Psoas muscle (tissue), 8 donors: ENCODE measurements at regions of chr19 and their contacts with region 1.

Region 1: DNA sequence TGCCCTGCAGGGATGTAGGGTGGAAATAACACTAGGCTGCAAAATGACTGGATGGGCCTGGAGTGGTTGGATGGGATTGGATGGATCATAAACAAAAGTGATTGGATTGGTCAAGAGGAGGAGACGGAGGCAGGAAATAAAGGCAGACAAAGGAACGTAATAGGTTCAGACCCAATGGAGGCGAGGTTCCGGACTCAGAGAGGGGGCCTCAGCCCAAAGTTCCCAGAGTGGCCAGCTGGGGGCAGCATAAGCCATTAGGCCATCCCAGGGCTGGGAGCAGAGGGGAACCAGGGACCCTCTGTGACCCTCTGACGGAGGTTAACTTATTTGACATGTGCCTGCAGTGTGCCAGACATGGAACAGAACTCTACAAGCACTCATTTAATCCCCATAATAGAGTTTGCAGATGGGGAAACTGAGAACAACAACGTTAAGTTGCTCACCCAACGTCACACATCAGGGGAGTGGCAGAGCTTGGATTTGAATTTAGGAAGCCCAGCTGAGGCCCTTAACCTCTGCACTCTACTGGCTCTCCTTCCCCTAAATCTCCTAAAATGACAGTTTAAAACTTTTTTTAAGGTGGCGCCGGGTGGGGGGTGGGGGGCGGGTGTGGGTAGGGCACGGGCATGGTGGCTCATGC is 15.3 kb upstream of the MAP1S start:
- DNase-seq: peak in 1 of 2 donors; percentile 55
- ATAC-seq: peak in 3 of 4 donors; percentile 37 to 66 (median 62)
- H3K4me3 ChIP-seq: no peak overlapping the region
- H3K27ac ChIP-seq: no peak overlapping the region
- H3K4me1 ChIP-seq: no peaks in the 10 kb centered on the region
- H3K27me3 ChIP-seq: peaks cover 0 to 25% (median 0%) of the 10 kb centered on the region in 3 donors
- CTCF ChIP-seq: peak; percentile 70

Region 2: DNA sequence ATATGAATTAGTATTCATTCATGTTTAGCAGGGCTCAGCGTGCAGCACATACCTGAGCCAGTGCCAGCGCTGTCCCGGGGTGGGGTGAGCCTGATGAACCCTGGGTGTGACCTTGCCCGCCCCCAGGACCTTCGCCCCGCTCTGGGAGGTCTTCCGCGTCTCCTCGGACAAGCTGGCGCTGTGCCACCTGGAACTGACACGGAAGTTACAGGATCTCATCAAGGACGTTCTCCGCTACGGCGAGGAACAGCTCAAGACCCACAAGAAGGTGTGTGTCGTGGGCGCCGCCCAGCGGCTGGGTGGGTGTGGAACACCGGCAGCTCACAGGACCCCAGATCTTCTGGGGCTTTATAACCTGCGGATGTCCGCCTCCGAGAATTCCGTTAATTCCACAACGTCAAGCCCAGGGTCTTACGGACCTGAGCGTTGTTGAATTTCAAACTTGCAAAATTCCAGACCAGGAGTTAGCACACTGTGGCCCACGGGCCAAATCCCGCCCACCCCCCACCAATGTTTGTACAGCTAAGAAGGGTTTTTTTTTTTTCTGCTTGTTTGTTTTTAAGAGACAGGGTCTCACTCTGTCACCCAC is 62.7 kb after region 1 on chr19:
- intact Hi-C with region 1: loop called in 1 of 2 experiments (anchors 1 kb)
- DNase-seq: peak; percentile 78 to 84
- ATAC-seq: peak; percentile 58 to 68 (median 59)
- H3K4me3 ChIP-seq: no peak overlapping the region
- H3K27ac ChIP-seq: no peak overlapping the region
- H3K4me1 ChIP-seq: no peaks in the 10 kb centered on the region
- H3K27me3 ChIP-seq: peaks cover 0 to 16% (median 0%) of the 10 kb centered on the region in 3 donors
- CTCF ChIP-seq: peak; percentile 70

Region 3: GRCh38 chr19:17865364-17866311 is 161.7 kb after region 1 on chr19:
- intact Hi-C with region 1: no loop called
- DNase-seq: no peak
- ATAC-seq: peak; percentile 11 to 25 (median 18)
- H3K4me3 ChIP-seq: no peak overlapping the region
- H3K27ac ChIP-seq: peak overlapping the region; percentile 99
- H3K4me1 ChIP-seq: peaks cover 29% of the 10 kb centered on the region
- H3K27me3 ChIP-seq: peaks cover 0 to 10% (median 6%) of the 10 kb centered on the region in 3 donors
- CTCF ChIP-seq: no peak